Naive thymus-derived CD4-positive, alpha-beta T cell (primary cell): ENCODE measurements at regions of chr17 and their contacts with region 1.

Region 1: DNA sequence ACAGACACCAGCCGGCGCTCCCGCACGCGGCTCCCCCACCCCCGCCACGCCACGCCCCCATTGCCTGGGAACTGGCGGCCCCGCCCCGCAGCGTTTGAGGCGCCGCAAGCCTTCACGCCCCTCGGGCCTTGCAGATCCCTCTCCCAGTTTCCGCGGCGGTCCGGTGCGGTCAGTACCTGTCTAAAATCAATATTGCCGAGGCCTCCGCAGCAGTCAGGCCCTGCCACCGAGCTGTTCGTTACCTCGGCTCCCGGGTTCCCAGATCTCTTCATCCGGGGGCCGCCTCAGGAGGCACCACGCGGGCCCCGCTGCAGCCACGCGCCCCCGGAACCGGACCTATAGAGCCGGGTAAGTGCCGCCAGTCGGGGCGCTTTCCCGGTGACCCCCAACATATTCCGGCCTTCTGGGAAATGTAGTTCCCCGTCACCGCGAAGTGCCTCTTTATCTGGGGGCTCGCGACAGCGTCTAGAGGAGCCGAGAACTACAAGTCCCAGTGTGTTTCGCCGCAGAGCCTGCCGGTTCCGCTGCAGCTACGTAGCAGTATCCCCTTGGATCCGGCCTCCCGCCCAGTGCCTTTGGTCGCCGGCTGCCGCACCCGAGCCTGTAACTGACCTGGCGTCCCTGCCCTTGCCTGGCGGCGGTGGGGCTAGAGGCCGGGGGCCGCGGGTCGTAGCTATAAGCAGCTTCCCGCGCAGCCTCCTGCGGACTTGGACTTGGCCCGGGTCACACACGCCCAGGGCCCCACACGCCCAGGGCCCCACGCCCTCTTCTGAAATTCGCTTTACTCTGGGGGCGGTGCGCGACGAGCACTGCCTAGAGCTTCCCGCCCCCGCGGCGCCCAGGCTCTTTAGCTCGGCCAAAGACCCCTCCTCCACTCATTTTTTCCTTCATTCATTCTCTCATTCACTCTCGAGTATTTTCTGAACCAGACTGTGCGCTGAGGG is at the start of gene PEMT:
- DNase-seq: peak; percentile 78 to 96 (median 93)
- ATAC-seq: peak; percentile 95
- H3K4me3 ChIP-seq: peak within 1 kb of the TSS; percentile 93
- H3K4me3 Mint-ChIP-seq: peak within 1 kb of the TSS; percentile 87 to 99 (median 93)
- H3K27ac ChIP-seq: peak within 1 kb of the TSS; percentile 79
- H3K27ac Mint-ChIP-seq: peak within 1 kb of the TSS; percentile 86 to 100 (median 93)
- H3K4me1 ChIP-seq: peaks cover 16 to 18% of the 10 kb centered on the region in 2 donors
- H3K4me1 Mint-ChIP-seq: peaks cover 14 to 32% (median 19%) of the 10 kb centered on the region in 7 donors
- H3K27me3 ChIP-seq: no peaks in the 10 kb centered on the region
- H3K27me3 Mint-ChIP-seq: no peaks in the 10 kb centered on the region
- total RNA-seq, gene PEMT: 9.5 to 15.0 (median 12.1) TPM

Region 2: GRCh38 chr17:17237026-17237799 is 354.4 kb before region 1 on chr17 and contains the start of gene FLCN:
- CTCF ChIA-PET with region 1: interaction called, 3 read pairs
- POLR2A ChIA-PET with region 1: no interaction called
- intact Hi-C with region 1: loop called in 1 of 2 experiments (anchors 1 kb)
- DNase-seq: peak; percentile 86 to 96 (median 91)
- ATAC-seq: peak; percentile 95
- H3K4me3 ChIP-seq: peak within 1 kb of the TSS; percentile 92
- H3K4me3 Mint-ChIP-seq: peak within 1 kb of the TSS; percentile 90 to 99 (median 96)
- H3K27ac ChIP-seq: peak within 1 kb of the TSS; percentile 97
- H3K27ac Mint-ChIP-seq: peak within 1 kb of the TSS; percentile 97 to 100 (median 98)
- H3K4me1 ChIP-seq: peaks cover 13 to 18% of the 10 kb centered on the region in 2 donors
- H3K4me1 Mint-ChIP-seq: peaks cover 16 to 38% (median 31%) of the 10 kb centered on the region in 7 donors
- H3K27me3 ChIP-seq: no peaks in the 10 kb centered on the region
- H3K27me3 Mint-ChIP-seq: peaks cover 0 to 6% (median 0%) of the 10 kb centered on the region in 5 donors
- total RNA-seq, gene FLCN: 39.4 to 94.7 (median 66.9) TPM

Region 3: GRCh38 chr17:17496189-17497064 is 95.2 kb before region 1 on chr17 and contains the start of gene RASD1:
- CTCF ChIA-PET with region 1: interaction called, 3 read pairs
- POLR2A ChIA-PET with region 1: interaction called, 9 read pairs
- intact Hi-C with region 1: loop called (anchors 1 kb)
- DNase-seq: peak; percentile 61 to 89 (median 74)
- ATAC-seq: peak; percentile 90
- H3K4me3 ChIP-seq: peak within 1 kb of the TSS; percentile 61
- H3K4me3 Mint-ChIP-seq: peak within 1 kb of the TSS; percentile 77 to 91 (median 86)
- H3K27ac ChIP-seq: peak within 1 kb of the TSS; percentile 44
- H3K27ac Mint-ChIP-seq: peak within 1 kb of the TSS in 5 of 9 donors; percentile 29 to 86 (median 42)
- H3K4me1 ChIP-seq: peaks cover 3 to 11% of the 10 kb centered on the region in 2 donors
- H3K4me1 Mint-ChIP-seq: peaks cover 12 to 20% (median 14%) of the 10 kb centered on the region in 7 donors
- H3K27me3 ChIP-seq: no peaks in the 10 kb centered on the region
- H3K27me3 Mint-ChIP-seq: peaks cover 5 to 24% (median 6%) of the 10 kb centered on the region in 5 donors
- total RNA-seq, gene RASD1: 0.35 to 2.5 (median 1.0) TPM

Region 4: GRCh38 chr17:17628388-17629008 is 36.9 kb after region 1 on chr17:
- CTCF ChIA-PET with region 1: no interaction called
- POLR2A ChIA-PET with region 1: no interaction called
- intact Hi-C with region 1: loop called in 1 of 2 experiments (anchors 1 kb)
- DNase-seq: peak in 7 of 9 donors; percentile 13 to 53 (median 46)
- ATAC-seq: peak; percentile 74
- H3K4me3 ChIP-seq: peak overlapping the region; percentile 55
- H3K4me3 Mint-ChIP-seq: peak overlapping the region; percentile 70 to 98 (median 92)
- H3K27ac ChIP-seq: peak overlapping the region; percentile 75
- H3K27ac Mint-ChIP-seq: peak overlapping the region; percentile 87 to 98 (median 94)
- H3K4me1 ChIP-seq: peaks cover 0 to 4% of the 10 kb centered on the region in 2 donors
- H3K4me1 Mint-ChIP-seq: peaks cover 6 to 13% (median 12%) of the 10 kb centered on the region in 7 donors
- H3K27me3 ChIP-seq: no peaks in the 10 kb centered on the region
- H3K27me3 Mint-ChIP-seq: no peaks in the 10 kb centered on the region

Region 5: DNA sequence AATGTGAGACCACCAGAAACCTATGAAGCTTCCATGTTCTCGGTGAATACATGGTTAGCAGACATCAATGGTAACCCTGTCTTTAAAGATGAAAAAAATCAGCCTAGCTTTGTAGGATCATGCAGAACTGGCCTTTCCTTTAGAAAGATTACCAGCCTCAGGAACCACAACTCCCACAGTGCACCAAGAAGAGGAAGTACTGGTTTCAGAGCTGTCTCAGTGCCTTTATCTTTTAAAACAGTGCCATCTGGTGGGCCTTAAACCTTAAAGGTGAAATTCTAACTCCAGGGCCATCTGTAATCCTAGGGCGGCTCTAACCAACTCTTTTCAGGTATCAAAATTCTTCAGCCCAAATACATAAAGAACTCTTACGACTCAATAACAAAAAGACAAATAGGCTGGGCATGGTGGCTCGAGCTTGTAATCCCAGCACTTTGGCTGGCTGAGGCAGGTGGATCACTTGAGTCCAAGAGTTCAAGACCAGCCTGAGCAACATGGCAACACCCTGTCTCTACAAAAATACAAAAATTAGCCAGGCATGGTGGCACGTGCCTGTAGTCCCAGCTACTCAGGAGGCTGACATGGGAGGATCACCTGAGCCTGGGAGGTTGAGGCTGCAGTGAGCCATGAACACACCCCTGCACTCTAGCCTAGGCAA is 441.9 kb after region 1 on chr17:
- CTCF ChIA-PET with region 1: no interaction called
- POLR2A ChIA-PET with region 1: no interaction called
- intact Hi-C with region 1: loop called in 1 of 2 experiments (anchors 1 kb)
- DNase-seq: peak in 8 of 9 donors; percentile 37 to 81 (median 70)
- ATAC-seq: peak; percentile 98
- H3K4me3 ChIP-seq: no peak overlapping the region
- H3K4me3 Mint-ChIP-seq: no peak overlapping the region
- H3K27ac ChIP-seq: no peak overlapping the region
- H3K27ac Mint-ChIP-seq: peak overlapping the region in 4 of 9 donors; percentile 3 to 79 (median 42)
- H3K4me1 ChIP-seq: peaks cover 17 to 21% of the 10 kb centered on the region in 2 donors
- H3K4me1 Mint-ChIP-seq: peaks cover 19 to 42% (median 31%) of the 10 kb centered on the region in 7 donors
- H3K27me3 ChIP-seq: no peaks in the 10 kb centered on the region
- H3K27me3 Mint-ChIP-seq: no peaks in the 10 kb centered on the region